Activated CD4-positive, alpha-beta T cell treated with anti-CD3 and anti-CD28 coated beads for 36 hours (primary cell): ENCODE measurements at regions of chr3 and their contacts with region 1.

Region 1: DNA sequence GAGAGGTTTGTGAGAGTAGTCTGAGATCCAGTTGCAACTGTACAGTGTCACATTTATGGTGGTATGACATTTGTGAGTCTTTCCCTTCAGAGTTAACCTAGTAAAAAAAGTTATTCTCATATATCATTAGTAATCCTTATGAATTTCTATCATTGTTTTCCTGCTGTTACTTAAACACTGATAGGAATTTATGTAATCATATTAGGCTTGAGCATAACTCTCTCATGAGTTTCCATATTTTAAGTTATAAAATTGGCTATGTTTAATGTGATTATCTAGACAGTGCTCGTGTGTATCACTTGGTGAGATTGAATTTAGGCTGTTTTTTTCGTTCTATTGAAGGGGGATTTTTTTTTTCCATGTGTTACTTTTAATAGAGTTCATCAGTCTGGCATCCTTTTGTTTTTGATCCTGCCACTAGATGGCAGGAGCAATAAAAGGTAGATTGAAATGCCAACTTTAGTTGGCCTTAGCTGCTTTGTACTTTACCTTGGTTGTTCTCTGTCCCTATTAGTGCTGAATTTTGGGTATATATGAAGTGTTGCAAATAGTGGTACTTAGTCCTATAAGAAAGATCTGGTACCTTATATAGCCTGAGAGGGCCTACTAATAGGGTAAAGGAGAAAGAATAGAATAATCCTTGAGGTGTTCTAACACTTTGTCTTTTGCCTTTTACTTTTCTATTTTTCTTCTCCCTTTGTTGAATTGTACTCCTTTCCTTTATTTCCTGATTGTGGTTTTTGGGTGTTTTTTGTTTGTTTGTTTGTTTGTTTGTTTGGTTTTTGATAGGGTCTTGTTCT is 17.9 kb downstream of the STT3B start:
- DNase-seq: peak; percentile 21
- ATAC-seq: peak; percentile 69
- H3K4me3 Mint-ChIP-seq: no peak overlapping the region
- H3K27ac Mint-ChIP-seq: peak overlapping the region; percentile 43
- H3K4me1 Mint-ChIP-seq: peaks cover 80% of the 10 kb centered on the region
- H3K27me3 Mint-ChIP-seq: no peaks in the 10 kb centered on the region

Region 2: GRCh38 chr3:31567036-31567435 is 16.4 kb after region 1 on chr3:
- CTCF ChIA-PET with region 1: interaction called, 11 read pairs
- POLR2A ChIA-PET with region 1: no interaction called
- intact Hi-C with region 1: no loop called
- DNase-seq: peak; percentile 51
- ATAC-seq: peak; percentile 42
- H3K4me3 Mint-ChIP-seq: no peak overlapping the region
- H3K27ac Mint-ChIP-seq: no peak overlapping the region
- H3K4me1 Mint-ChIP-seq: peaks cover 86% of the 10 kb centered on the region
- H3K27me3 Mint-ChIP-seq: no peaks in the 10 kb centered on the region

Region 3: DNA sequence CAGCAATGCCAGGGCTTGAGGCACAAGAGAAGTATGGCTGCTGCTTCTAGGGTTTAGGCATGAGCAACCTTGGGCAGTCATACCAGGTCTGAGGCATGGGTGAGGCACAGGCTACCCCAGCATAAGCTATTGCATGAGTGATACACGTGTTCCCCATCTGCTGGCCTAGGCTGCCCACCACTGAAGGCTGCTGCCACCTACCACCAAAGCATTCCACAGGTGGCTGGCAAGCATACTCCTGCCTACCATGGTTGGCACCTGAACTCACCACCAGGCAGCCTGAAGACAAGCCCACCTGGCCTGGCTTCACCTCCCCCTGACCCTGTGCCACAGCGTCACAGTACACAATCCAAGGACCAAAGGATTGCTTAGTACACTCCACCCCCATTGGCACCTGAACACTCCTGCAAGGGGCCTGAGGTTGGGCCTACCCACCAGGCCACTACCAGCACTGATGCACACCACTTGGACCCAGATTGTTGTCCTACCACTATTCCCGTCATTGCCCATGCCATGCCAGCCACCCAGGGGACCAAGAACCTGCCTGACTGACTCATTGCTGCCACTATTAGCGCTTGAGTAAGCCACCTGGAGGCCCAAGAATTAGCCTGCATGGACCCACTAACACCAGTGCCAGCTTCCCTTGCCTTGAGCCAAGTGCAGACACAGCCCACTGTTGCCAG is 97.8 kb after region 1 on chr3:
- CTCF ChIA-PET with region 1: no interaction called
- POLR2A ChIA-PET with region 1: no interaction called
- intact Hi-C with region 1: no loop called
- DNase-seq: no peak
- ATAC-seq: peak; percentile 23
- H3K4me3 Mint-ChIP-seq: no peak overlapping the region
- H3K27ac Mint-ChIP-seq: no peak overlapping the region
- H3K4me1 Mint-ChIP-seq: no peaks in the 10 kb centered on the region
- H3K27me3 Mint-ChIP-seq: no peaks in the 10 kb centered on the region

Region 4: DNA sequence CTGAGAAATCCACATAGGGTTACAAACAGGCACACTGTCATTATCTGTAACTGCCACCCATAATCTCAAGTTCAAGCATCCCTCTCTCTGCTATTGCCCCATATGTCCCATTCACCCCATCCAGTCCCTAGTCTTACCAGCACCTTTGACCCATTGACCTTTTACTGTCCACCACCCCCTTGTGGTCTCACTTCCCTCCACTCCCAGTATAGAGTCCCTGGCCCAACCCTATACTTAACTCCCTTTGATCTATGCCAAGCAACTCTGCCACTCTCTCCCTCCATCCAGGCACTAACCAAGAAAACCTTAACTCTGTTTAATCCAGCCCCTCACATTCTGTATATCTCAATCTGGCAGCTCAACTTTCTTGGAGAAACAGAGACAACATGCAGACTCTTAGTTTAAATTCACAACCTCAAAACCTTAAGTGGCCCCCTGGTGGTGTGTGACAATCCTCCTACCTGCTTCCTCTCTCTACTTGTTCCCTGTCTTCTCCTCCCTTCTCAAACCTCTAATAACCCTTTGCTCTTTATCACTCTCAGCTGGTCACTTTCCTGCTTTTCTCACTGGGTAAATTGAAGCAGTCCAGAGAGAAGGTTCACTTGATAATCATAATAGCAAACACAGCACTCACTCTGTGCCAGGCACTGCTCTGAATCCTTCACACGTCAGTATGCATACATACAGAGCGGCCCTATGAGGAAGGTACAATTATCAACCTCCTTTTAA is 144.8 kb after region 1 on chr3:
- CTCF ChIA-PET with region 1: no interaction called
- POLR2A ChIA-PET with region 1: no interaction called
- intact Hi-C with region 1: loop called (anchors 1 to 5 kb)
- DNase-seq: peak; percentile 62
- ATAC-seq: peak; percentile 55
- H3K4me3 Mint-ChIP-seq: no peak overlapping the region
- H3K27ac Mint-ChIP-seq: no peak overlapping the region
- H3K4me1 Mint-ChIP-seq: no peaks in the 10 kb centered on the region
- H3K27me3 Mint-ChIP-seq: no peaks in the 10 kb centered on the region